ENCODE measurements at regions of chr11 and their contacts with region 1.

Region 1: GRCh38 chr11:90178760-90179159 is 44.1 kb downstream of the CHORDC1 start:
- DNase-seq: peak in 1 of 2 experiments; percentile 52
- H3K4me3 ChIP-seq: no peak overlapping the region
- H3K4me3 Mint-ChIP-seq: no peak overlapping the region
- H3K27ac Mint-ChIP-seq: peak overlapping the region; percentile 1
- H3K4me1 ChIP-seq: peaks cover 68% of the 10 kb centered on the region
- H3K4me1 Mint-ChIP-seq: peaks cover 42% of the 10 kb centered on the region
- H3K27me3 ChIP-seq: no peaks in the 10 kb centered on the region
- H3K27me3 Mint-ChIP-seq: no peaks in the 10 kb centered on the region
- CTCF ChIP-seq: no peak

Region 2: DNA sequence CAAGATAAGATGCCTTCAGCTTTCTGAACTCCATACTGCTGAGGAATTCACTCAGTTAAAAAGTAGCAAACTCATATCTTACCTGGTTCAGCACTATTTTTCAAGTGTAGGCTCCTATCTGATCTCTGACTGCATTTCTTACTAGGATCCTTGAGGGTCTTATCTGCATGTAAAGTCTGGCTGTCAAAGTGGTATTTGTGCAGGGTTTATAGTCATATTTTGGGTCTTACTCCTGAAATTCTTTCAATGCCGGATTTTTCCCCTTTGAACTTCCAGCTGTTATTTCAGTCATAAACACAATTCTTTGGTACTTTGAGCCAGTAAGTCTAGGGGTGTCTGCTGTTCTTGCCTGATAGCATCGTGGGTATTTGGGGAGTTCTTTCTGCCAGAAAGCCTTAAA is 662.3 kb before region 1 on chr11:
- CTCF ChIA-PET with region 1: no interaction called
- POLR2A ChIA-PET with region 1: no interaction called
- intact Hi-C with region 1: loop called (anchors 10 kb)
- DNase-seq: peak in 1 of 2 experiments; percentile 48
- H3K4me3 ChIP-seq: no peak overlapping the region
- H3K4me3 Mint-ChIP-seq: peak overlapping the region; percentile 27
- H3K27ac Mint-ChIP-seq: peak overlapping the region; percentile 14
- H3K4me1 ChIP-seq: peaks cover 18% of the 10 kb centered on the region
- H3K4me1 Mint-ChIP-seq: peaks cover 24% of the 10 kb centered on the region
- H3K27me3 ChIP-seq: no peaks in the 10 kb centered on the region
- H3K27me3 Mint-ChIP-seq: no peaks in the 10 kb centered on the region
- CTCF ChIP-seq: no peak

Measured in Caco-2 (cell line).